ENCODE measurements at regions of chr3 and their contacts with region 1.

Region 1: GRCh38 chr3:177359593-177360357 is 162.5 kb upstream of the TBL1XR1 start:
- DNase-seq: peak; percentile 95 to 96 (median 96)
- H3K4me3 ChIP-seq: peak overlapping the region; percentile 54 to 65
- H3K4me3 Mint-ChIP-seq: peak overlapping the region; percentile 88 to 98 (median 94)
- H3K27ac ChIP-seq: peak overlapping the region; percentile 96
- H3K27ac Mint-ChIP-seq: peak overlapping the region; percentile 96 to 100 (median 99)
- H3K4me1 ChIP-seq: peaks cover 50% of the 10 kb centered on the region
- H3K4me1 Mint-ChIP-seq: peaks cover 33 to 63% (median 49%) of the 10 kb centered on the region in 4 donors
- H3K27me3 ChIP-seq: no peaks in the 10 kb centered on the region
- H3K27me3 Mint-ChIP-seq: peaks cover 1 to 7% of the 10 kb centered on the region in 2 donors

Region 2: DNA sequence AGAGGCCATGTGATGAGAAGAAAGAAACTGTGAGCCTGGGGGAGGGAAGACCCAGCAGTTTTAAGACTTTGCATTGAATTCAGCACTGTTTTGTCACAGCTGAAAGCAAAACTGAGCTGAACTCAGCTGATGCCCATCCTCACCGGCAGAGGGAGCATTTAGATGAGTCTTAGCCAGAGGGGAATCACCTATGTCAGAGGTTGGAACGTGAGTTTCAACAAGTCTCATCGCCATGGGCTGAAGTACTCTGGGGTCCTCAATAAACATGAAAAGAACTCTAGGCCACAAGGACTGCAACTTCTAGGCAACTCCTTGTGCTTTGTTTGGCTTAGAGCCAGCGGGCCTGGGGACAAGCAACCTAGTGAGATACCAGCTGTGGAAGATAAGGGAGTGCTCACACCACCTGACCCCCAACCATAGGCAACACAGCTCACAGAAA is 487.0 kb before region 1 on chr3:
- CTCF ChIA-PET with region 1: no interaction called
- POLR2A ChIA-PET with region 1: no interaction called
- intact Hi-C with region 1: loop called (anchors 1 kb)
- DNase-seq: peak in 4 of 5 donors; percentile 42 to 56 (median 46)
- H3K4me3 ChIP-seq: no peak overlapping the region
- H3K4me3 Mint-ChIP-seq: no peak overlapping the region
- H3K27ac ChIP-seq: no peak overlapping the region
- H3K27ac Mint-ChIP-seq: peak overlapping the region in 1 of 7 donors; percentile 31
- H3K4me1 ChIP-seq: peaks cover 6% of the 10 kb centered on the region
- H3K4me1 Mint-ChIP-seq: peaks cover 4 to 7% (median 5%) of the 10 kb centered on the region in 4 donors
- H3K27me3 ChIP-seq: no peaks in the 10 kb centered on the region
- H3K27me3 Mint-ChIP-seq: peaks cover 2 to 5% of the 10 kb centered on the region in 2 donors

Region 3: GRCh38 chr3:177144923-177145780 is 214.6 kb before region 1 on chr3:
- CTCF ChIA-PET with region 1: no interaction called
- POLR2A ChIA-PET with region 1: interaction called, 23 read pairs
- intact Hi-C with region 1: loop called (anchors 2 kb)
- DNase-seq: peak; percentile 48 to 72 (median 60)
- H3K4me3 ChIP-seq: no peak overlapping the region
- H3K4me3 Mint-ChIP-seq: peak overlapping the region; percentile 57 to 78 (median 72)
- H3K27ac ChIP-seq: peak overlapping the region; percentile 61
- H3K27ac Mint-ChIP-seq: peak overlapping the region; percentile 82 to 96 (median 92)
- H3K4me1 ChIP-seq: peaks cover 93% of the 10 kb centered on the region
- H3K4me1 Mint-ChIP-seq: peaks cover 63 to 84% (median 70%) of the 10 kb centered on the region in 4 donors
- H3K27me3 ChIP-seq: no peaks in the 10 kb centered on the region
- H3K27me3 Mint-ChIP-seq: no peaks in the 10 kb centered on the region

Region 4: DNA sequence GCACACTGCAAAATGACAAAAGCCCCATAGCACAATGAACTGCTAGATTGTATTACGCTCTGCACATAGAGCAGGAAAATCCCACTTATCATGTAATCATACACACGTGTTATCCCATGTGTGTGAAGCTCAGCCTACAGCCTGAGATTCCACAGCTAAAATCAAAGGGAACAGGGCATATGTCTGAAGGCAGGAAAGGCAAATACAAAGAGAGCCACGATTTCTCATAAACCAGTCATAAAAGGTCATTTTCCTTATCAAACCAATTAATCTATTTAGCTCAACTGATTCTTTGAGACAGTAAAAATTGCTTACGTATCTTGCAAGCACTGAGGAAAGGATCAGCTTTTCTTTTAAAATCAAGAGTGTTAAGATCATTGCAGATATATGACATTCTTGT is 36.9 kb after region 1 on chr3:
- CTCF ChIA-PET with region 1: interaction called, 3 read pairs
- POLR2A ChIA-PET with region 1: interaction called, 14 read pairs
- intact Hi-C with region 1: no loop called
- DNase-seq: no peak
- H3K4me3 ChIP-seq: no peak overlapping the region
- H3K4me3 Mint-ChIP-seq: no peak overlapping the region
- H3K27ac ChIP-seq: no peak overlapping the region
- H3K27ac Mint-ChIP-seq: no peak overlapping the region
- H3K4me1 ChIP-seq: no peaks in the 10 kb centered on the region
- H3K4me1 Mint-ChIP-seq: peaks cover 3 to 9% (median 6%) of the 10 kb centered on the region in 4 donors
- H3K27me3 ChIP-seq: no peaks in the 10 kb centered on the region
- H3K27me3 Mint-ChIP-seq: no peaks in the 10 kb centered on the region

Region 5: DNA sequence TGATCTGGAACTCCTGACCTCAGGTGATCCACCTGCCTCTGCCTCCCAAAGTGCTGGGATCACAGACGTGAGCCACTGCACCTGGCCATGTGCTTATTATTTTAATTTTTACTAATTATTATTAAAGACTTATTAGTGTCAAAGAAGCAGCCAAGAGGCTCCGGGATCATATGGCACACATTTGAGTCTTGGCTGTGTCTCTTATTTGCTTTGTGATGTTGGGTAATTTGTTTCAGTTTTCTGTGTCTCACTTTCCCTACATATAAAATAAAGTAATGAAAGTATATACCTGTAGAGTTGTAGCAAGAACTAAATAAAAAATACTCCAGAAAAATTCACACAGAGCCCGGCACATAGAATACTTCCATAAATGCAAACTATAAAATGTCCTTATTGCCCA is 75.5 kb after region 1 on chr3:
- CTCF ChIA-PET with region 1: no interaction called
- POLR2A ChIA-PET with region 1: no interaction called
- intact Hi-C with region 1: no loop called
- DNase-seq: no peak
- H3K4me3 ChIP-seq: no peak overlapping the region
- H3K4me3 Mint-ChIP-seq: no peak overlapping the region
- H3K27ac ChIP-seq: no peak overlapping the region
- H3K27ac Mint-ChIP-seq: no peak overlapping the region
- H3K4me1 ChIP-seq: no peaks in the 10 kb centered on the region
- H3K4me1 Mint-ChIP-seq: no peaks in the 10 kb centered on the region
- H3K27me3 ChIP-seq: no peaks in the 10 kb centered on the region
- H3K27me3 Mint-ChIP-seq: no peaks in the 10 kb centered on the region

Region 6: GRCh38 chr3:177508519-177508918 is 148.7 kb after region 1 on chr3:
- CTCF ChIA-PET with region 1: no interaction called
- POLR2A ChIA-PET with region 1: no interaction called
- intact Hi-C with region 1: no loop called
- DNase-seq: no peak
- H3K4me3 ChIP-seq: no peak overlapping the region
- H3K4me3 Mint-ChIP-seq: no peak overlapping the region
- H3K27ac ChIP-seq: no peak overlapping the region
- H3K27ac Mint-ChIP-seq: no peak overlapping the region
- H3K4me1 ChIP-seq: no peaks in the 10 kb centered on the region
- H3K4me1 Mint-ChIP-seq: peaks cover 0 to 9% (median 1%) of the 10 kb centered on the region in 4 donors
- H3K27me3 ChIP-seq: no peaks in the 10 kb centered on the region
- H3K27me3 Mint-ChIP-seq: no peaks in the 10 kb centered on the region

Region 7: DNA sequence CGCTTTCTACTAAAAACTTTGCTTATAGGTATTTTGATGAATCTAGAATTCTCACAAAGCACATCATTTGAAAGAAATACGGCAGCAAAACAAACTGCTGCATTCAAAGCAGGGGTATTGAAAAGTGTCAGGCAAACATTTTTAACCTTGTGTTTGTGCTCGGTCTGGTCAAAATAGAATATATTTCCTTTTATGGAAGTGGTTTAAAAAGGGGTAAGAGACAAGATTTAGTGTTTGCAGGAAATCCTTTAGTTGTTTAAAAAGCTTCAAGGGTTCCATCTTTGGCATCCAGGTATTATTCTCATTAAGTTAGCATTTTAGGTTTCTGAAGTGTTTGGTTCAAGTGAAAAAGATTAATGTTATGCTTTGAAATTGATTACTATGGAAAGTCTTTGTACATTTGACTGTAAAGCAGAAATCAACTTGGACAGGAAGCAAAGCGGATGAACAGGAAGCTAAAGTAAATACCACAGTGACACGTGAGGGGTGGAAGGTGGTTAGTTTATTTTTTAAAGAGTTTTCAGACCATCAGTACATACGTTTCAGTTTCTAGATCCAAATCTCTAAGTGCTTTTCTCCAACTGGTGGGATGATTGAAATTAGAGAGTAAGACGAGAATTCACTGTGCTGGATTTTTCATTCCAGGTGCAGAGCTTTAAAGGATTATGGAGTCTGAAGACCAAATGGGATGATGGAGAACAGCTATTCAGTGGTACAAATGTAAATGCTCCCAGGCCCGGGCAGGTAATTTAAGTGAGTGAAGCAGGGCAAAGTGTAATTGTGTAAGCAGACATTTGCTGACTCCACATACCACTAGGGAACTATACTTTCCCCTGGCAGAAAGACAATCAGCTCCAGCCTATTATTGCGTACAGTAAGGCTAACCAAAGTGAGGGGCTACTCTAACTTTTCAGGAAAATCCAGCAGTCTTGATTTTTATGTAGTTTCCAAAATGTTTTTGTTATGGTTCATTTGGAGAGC is 179.3 kb after region 1 on chr3:
- CTCF ChIA-PET with region 1: interaction called, 9 read pairs
- POLR2A ChIA-PET with region 1: interaction called, 33 read pairs
- intact Hi-C with region 1: loop called (anchors 5 kb)
- DNase-seq: peak in 4 of 5 donors; percentile 48 to 59 (median 56)
- H3K4me3 ChIP-seq: peak overlapping the region in 1 of 2 donors; percentile 8
- H3K4me3 Mint-ChIP-seq: peak overlapping the region; percentile 55 to 87 (median 84)
- H3K27ac ChIP-seq: peak overlapping the region; percentile 36
- H3K27ac Mint-ChIP-seq: peak overlapping the region; percentile 79 to 93 (median 92)
- H3K4me1 ChIP-seq: peaks cover 46% of the 10 kb centered on the region
- H3K4me1 Mint-ChIP-seq: peaks cover 47 to 68% (median 55%) of the 10 kb centered on the region in 4 donors
- H3K27me3 ChIP-seq: no peaks in the 10 kb centered on the region
- H3K27me3 Mint-ChIP-seq: no peaks in the 10 kb centered on the region

Region 8: GRCh38 chr3:177665122-177665808 is 305.5 kb after region 1 on chr3:
- CTCF ChIA-PET with region 1: interaction called, 19 read pairs
- POLR2A ChIA-PET with region 1: interaction called, 6 read pairs
- intact Hi-C with region 1: loop called (anchors 1 kb)
- DNase-seq: no peak
- H3K4me3 ChIP-seq: no peak overlapping the region
- H3K4me3 Mint-ChIP-seq: no peak overlapping the region
- H3K27ac ChIP-seq: no peak overlapping the region
- H3K27ac Mint-ChIP-seq: peak overlapping the region in 1 of 7 donors; percentile 54
- H3K4me1 ChIP-seq: no peaks in the 10 kb centered on the region
- H3K4me1 Mint-ChIP-seq: peaks cover 0 to 6% (median 2%) of the 10 kb centered on the region in 4 donors
- H3K27me3 ChIP-seq: no peaks in the 10 kb centered on the region
- H3K27me3 Mint-ChIP-seq: no peaks in the 10 kb centered on the region